PC-3 (cell line): ENCODE measurements at regions of chr3 and their contacts with region 1.

Region 1: GRCh38 chr3:9542182-9542581 is 11.4 kb downstream of the LHFPL4 start:
- DNase-seq: no peak
- ATAC-seq: no peak
- H3K4me3 ChIP-seq: no peak overlapping the region
- H3K27ac ChIP-seq: no peak overlapping the region
- H3K4me1 ChIP-seq: no peaks in the 10 kb centered on the region
- H3K27me3 ChIP-seq: peaks cover 28% of the 10 kb centered on the region
- CTCF ChIP-seq: no peak

Region 2: DNA sequence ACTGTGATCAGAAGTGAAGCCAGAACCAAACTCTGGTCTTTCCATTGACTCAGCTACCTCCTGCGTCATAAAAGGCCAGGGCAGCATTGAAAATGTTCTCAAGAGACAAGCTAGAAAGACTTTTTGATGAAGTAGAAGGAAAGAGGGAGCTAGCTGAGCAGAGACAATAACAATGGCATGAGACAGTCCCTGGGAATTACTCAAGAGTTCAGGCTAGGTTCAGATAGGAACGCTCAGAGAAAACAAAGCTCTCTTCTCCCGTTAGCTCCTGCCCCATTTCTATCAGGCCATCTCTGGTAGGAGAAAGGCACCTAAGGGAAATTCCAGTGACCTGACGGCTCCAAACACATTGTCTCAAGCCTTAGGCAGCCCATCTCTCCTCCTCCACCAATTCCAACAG is 765.8 kb before region 1 on chr3:
- CTCF ChIA-PET with region 1: no interaction called
- POLR2A ChIA-PET with region 1: no interaction called
- intact Hi-C with region 1: no loop called
- DNase-seq: no peak
- ATAC-seq: no peak
- H3K4me3 ChIP-seq: no peak overlapping the region
- H3K27ac ChIP-seq: no peak overlapping the region
- H3K4me1 ChIP-seq: no peaks in the 10 kb centered on the region
- H3K27me3 ChIP-seq: no peaks in the 10 kb centered on the region
- CTCF ChIP-seq: no peak

Region 3: DNA sequence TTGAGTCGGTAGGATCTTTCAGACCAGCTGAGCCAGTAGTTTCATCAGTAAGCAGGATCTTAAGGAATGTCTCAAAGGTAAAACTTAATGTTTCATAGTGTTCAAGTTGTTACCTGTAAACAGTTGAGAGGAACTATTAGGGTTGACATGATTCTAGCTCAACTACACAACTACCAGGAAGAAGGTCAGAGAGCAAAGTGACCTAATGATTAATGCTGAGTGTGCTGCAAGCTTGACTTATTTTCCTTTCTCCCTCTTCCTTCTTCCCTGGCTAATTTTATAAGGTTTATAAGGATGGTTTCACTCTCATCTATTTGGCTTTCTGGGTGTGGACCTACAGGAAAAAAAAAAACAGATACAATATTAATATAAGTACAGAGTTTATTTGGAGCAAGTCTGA is 41.6 kb after region 1 on chr3:
- CTCF ChIA-PET with region 1: no interaction called
- POLR2A ChIA-PET with region 1: no interaction called
- intact Hi-C with region 1: loop called (anchors 1 kb)
- DNase-seq: peak; percentile 44
- ATAC-seq: peak; percentile 82
- H3K4me3 ChIP-seq: no peak overlapping the region
- H3K27ac ChIP-seq: peak overlapping the region; percentile 76
- H3K4me1 ChIP-seq: no peaks in the 10 kb centered on the region; the same call in 1 of the 2 replicates
- H3K27me3 ChIP-seq: no peaks in the 10 kb centered on the region
- CTCF ChIP-seq: no peak